GM12878 (cell line): ENCODE measurements at regions of chr1 and their contacts with region 1.

Region 1: GRCh38 chr1:223549740-223550139 is 115.8 kb downstream of the CAPN8 start:
- DNase-seq: no peak
- ATAC-seq: peak; percentile 40
- H3K4me3 ChIP-seq: no peak overlapping the region
- H3K27ac ChIP-seq: no peak overlapping the region
- H3K4me1 ChIP-seq: peaks cover 20% of the 10 kb centered on the region
- H3K27me3 ChIP-seq: no peaks in the 10 kb centered on the region
- CTCF ChIP-seq: peak in 2 of 3 experiments; percentile 20 to 29; a peak in 2 of 6 replicates
- EP300 ChIP-seq: no peak
- POLR2A ChIP-seq: no peak
- RAD21 ChIP-seq: no peak

Region 2: GRCh38 chr1:223538981-223539380 is 10.8 kb before region 1 on chr1:
- CTCF ChIA-PET with region 1: interaction called, 18 read pairs
- POLR2A ChIA-PET with region 1: interaction called, 12 read pairs
- RAD21 ChIA-PET with region 1: interaction called, 11 read pairs
- SMC1A ChIA-PET with region 1: interaction called, 9 read pairs
- in situ Hi-C with region 1: no loop called
- intact Hi-C with region 1: no loop called
- DNase-seq: no peak
- ATAC-seq: no peak
- H3K4me3 ChIP-seq: no peak overlapping the region
- H3K27ac ChIP-seq: no peak overlapping the region
- H3K4me1 ChIP-seq: no peaks in the 10 kb centered on the region
- H3K27me3 ChIP-seq: peaks cover 0 to 3% of the 10 kb centered on the region in 2 experiments; a peak in 1 of 4 replicates
- CTCF ChIP-seq: no peak
- EP300 ChIP-seq: no peak
- POLR2A ChIP-seq: no peak
- RAD21 ChIP-seq: no peak

Region 3: DNA sequence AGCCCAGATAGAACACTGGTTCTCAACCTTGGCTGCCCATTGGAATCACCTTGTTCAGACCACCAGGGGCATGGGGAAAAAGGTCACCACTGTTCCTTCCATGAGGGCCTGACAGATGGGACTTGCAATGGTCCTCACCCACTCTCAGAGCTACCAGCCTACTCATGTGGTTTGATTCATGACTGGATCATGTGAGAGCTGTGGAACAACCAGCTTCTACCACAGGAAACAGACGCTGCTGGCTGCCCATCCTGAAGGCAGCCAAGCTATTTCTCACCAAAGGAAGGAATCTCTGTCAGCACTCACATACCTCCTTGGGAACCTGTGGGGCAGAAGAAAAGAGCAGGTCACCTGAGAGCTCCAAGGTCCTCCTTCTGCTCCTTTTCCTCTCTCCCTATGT is 62.2 kb after region 1 on chr1:
- CTCF ChIA-PET with region 1: interaction called, 160 read pairs
- POLR2A ChIA-PET with region 1: interaction called, 4 read pairs
- RAD21 ChIA-PET with region 1: interaction called, 17 read pairs
- SMC1A ChIA-PET with region 1: interaction called, 14 read pairs
- in situ Hi-C with region 1: no loop called
- intact Hi-C with region 1: no loop called
- DNase-seq: no peak
- ATAC-seq: no peak
- H3K4me3 ChIP-seq: no peak overlapping the region
- H3K27ac ChIP-seq: no peak overlapping the region
- H3K4me1 ChIP-seq: no peaks in the 10 kb centered on the region
- H3K27me3 ChIP-seq: peaks cover 0 to 3% of the 10 kb centered on the region in 2 experiments; a peak in 1 of 4 replicates
- CTCF ChIP-seq: no peak
- EP300 ChIP-seq: no peak
- POLR2A ChIP-seq: no peak
- RAD21 ChIP-seq: no peak

Region 4: DNA sequence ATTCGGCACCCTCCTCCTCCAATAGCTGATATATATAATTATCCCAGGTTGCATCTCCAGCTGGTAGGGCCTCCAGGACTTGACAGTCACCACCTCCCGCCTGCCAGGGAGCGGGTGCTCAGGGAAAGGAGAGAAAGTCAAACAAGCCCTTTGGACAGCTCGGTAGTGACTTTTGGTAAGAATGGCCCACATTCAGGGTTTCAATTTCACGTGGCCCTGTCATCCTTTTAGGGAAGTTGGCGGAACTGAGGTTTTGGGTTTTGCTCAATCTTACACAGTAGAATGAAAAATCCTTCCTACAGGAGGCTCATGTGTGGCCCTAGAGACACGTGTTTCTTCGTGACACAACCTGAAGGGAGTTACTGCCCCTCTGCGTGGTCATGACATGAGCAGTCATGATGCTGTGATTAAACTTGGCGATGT is 71.6 kb after region 1 on chr1:
- CTCF ChIA-PET with region 1: interaction called, 26 read pairs
- POLR2A ChIA-PET with region 1: interaction called, 3 read pairs
- RAD21 ChIA-PET with region 1: interaction called, 6 read pairs
- SMC1A ChIA-PET with region 1: interaction called, 5 read pairs
- in situ Hi-C with region 1: no loop called
- intact Hi-C with region 1: no loop called
- DNase-seq: peak; percentile 60
- ATAC-seq: peak; percentile 94
- H3K4me3 ChIP-seq: no peak overlapping the region
- H3K27ac ChIP-seq: no peak overlapping the region
- H3K4me1 ChIP-seq: peaks cover 5% of the 10 kb centered on the region; the same call in 1 of the 2 replicates
- H3K27me3 ChIP-seq: 0 out of 4 replicates have a peak, but pooled peaks cover 0 to 3% of the 10 kb centered on the region in 2 experiments
- CTCF ChIP-seq: no peak
- EP300 ChIP-seq: peak in 1 of 2 experiments; percentile 88; a peak in 2 of 4 replicates
- POLR2A ChIP-seq: no peak
- RAD21 ChIP-seq: peak; percentile 2; the same call in 1 of the 2 replicates

Region 5: GRCh38 chr1:223628233-223629125 is 78.7 kb after region 1 on chr1:
- CTCF ChIA-PET with region 1: interaction called, 26 read pairs
- POLR2A ChIA-PET with region 1: no interaction called
- RAD21 ChIA-PET with region 1: interaction called, 6 read pairs
- SMC1A ChIA-PET with region 1: interaction called, 10 read pairs
- in situ Hi-C with region 1: no loop called
- intact Hi-C with region 1: no loop called
- DNase-seq: no peak
- ATAC-seq: peak; percentile 90
- H3K4me3 ChIP-seq: no peak overlapping the region
- H3K27ac ChIP-seq: no peak overlapping the region
- H3K4me1 ChIP-seq: no peaks in the 10 kb centered on the region
- H3K27me3 ChIP-seq: peaks cover 0 to 3% of the 10 kb centered on the region in 2 experiments; a peak in 1 of 4 replicates
- CTCF ChIP-seq: peak; percentile 67 to 78 (median 71)
- EP300 ChIP-seq: no peak
- POLR2A ChIP-seq: no peak
- RAD21 ChIP-seq: peak; percentile 58

Region 6: GRCh38 chr1:223776826-223777454 is 227.2 kb after region 1 on chr1:
- CTCF ChIA-PET with region 1: no interaction called
- POLR2A ChIA-PET with region 1: no interaction called
- RAD21 ChIA-PET with region 1: no interaction called
- SMC1A ChIA-PET with region 1: no interaction called
- in situ Hi-C with region 1: no loop called
- intact Hi-C with region 1: no loop called
- DNase-seq: no peak
- ATAC-seq: no peak
- H3K4me3 ChIP-seq: no peak overlapping the region
- H3K27ac ChIP-seq: no peak overlapping the region
- H3K4me1 ChIP-seq: peaks cover 5% of the 10 kb centered on the region
- H3K27me3 ChIP-seq: no peaks in the 10 kb centered on the region
- CTCF ChIP-seq: no peak
- EP300 ChIP-seq: no peak
- POLR2A ChIP-seq: no peak
- RAD21 ChIP-seq: no peak